ENCODE measurements at regions of chr4 and their contacts with region 1.

Region 1: GRCh38 chr4:153634738-153635353 is 49.2 kb upstream of the TLR2 start:
- DNase-seq: no peak
- CTCF ChIP-seq: peak; percentile 42

Region 2: GRCh38 chr4:153750197-153750817 is 115.5 kb after region 1 on chr4:
- in situ Hi-C with region 1: loop called (anchors 10 kb)
- DNase-seq: peak; percentile 69
- CTCF ChIP-seq: peak; percentile 75

Region 3: DNA sequence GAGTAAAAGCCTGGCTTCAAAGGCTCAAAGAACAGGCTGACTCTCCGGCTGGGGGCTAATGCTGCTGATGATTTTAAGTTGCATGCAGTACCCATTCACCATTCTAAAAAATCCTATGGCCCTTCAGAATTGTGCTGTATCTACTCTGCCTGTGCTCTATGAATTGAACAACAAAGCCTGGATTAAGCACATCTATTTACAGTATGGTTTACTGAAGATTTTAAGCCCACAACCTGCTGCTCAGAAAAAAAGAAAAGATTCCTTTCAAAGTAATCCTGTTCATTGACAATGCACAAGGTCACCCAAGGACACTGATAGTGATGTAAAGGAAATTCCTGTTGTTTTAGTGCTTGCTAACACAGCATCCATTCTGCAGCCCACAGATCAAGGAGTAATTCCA is 238.9 kb after region 1 on chr4:
- in situ Hi-C with region 1: no loop called
- DNase-seq: no peak
- CTCF ChIP-seq: no peak

Measured in GM13977 (cell line).